Right ventricle myocardium superior (tissue), 1 donor: ENCODE measurements at regions of chr1 and their contacts with region 1.

Region 1: GRCh38 chr1:115807723-115808122 is 33.2 kb downstream of the NHLH2 start:
- DNase-seq: no peak
- ATAC-seq: peak; percentile 78

Region 2: DNA sequence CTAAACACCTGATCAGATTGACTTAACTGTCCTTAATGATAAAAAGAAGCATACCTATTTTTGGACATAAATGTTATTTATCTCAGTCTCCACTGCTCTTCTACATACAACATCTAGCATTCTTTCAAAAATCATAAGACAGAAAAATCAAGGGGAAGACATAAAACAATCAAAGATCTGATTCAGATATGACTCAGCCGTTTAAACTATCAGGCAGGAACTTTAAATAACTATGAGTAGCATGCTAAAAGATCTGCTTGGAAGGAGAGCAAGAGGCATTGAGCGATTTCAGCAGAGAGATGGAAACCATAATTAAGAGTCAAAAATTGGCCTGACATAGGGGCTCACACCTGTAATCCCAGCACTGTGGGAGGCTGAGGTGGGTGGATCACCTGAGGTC is 141.4 kb after region 1 on chr1:
- intact Hi-C with region 1: no loop called
- DNase-seq: no peak
- ATAC-seq: no peak

Region 3: GRCh38 chr1:115976062-115976920 is 168.6 kb after region 1 on chr1 and contains the start of gene SLC22A15:
- intact Hi-C with region 1: loop called (anchors 5 kb)
- DNase-seq: peak; percentile 87
- ATAC-seq: peak; percentile 91
- total RNA-seq, gene SLC22A15: 10.7 TPM

Region 4: DNA sequence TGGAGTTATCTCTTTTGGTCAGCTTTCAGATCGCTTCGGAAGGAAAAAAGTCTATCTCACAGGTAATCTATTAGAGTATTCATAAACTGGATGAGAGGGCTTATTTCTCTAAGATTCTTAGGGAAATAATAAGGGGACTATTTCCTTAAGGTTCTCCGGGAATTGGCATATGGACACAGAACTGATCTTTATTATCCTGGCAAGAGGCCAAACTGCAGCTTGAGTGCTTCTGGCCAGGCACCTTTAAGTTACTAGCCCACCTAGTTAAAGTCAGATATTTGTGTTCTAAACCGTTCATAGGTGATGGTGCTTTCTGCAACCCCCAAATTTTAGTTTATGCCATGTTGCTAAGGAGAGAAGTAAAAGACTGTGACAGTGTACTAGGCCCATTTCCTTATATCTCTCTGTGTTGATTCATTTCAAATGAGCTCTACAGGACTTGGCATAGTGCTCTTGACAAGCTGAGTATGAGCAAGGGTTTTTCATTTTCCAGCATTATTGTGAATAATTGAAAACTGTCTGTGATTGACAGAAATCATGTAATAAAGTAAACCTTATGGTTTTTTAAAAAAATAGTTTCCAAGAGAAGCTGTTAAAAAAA is 212.0 kb after region 1 on chr1:
- intact Hi-C with region 1: loop called (anchors 10 kb)
- DNase-seq: no peak
- ATAC-seq: no peak